ENCODE measurements at regions of chr1 and their contacts with region 1.

Region 1: DNA sequence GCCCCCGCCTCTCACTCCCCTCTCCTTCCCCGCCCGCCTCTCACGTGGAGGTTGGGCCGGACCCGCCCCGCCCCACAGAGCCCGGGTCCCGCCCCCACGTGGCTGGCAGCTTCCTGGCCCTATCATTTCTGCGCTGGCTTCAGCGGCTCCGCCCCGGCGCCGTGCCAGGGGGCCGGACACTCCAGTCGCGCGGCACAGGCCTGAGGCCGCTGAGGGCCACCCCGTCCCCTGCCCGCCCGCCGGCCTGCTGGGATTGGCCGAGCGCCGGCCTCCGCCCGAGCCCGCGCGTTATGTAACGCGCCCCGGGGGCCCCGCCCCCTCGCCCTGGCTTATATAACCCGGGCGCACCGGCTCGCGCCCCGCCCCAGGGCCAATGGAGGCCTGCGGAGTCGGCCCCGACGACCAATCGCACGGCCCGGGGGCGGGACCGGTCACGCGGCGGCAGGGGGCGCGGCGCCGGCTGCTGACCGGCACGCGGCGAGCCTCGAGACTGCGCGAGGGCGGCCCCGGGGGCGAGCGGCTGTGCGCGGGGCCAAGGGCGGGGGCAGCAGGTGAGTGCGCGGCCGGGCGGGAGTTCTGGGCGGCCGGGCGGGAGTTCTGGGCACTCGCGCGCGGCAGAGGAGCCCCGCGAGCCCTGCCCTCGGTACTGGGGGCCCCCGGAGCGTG is at the start of gene PER3:
- DNase-seq: peak; percentile 94 to 99
- H3K4me3 ChIP-seq: peak within 1 kb of the TSS; percentile 80 to 84
- H3K27ac ChIP-seq: peak within 1 kb of the TSS; percentile 89 to 93
- H3K4me1 ChIP-seq: peaks cover 0 to 16% of the 10 kb centered on the region in 2 donors
- H3K27me3 ChIP-seq: no peaks in the 10 kb centered on the region
- CTCF ChIP-seq: no peak
- total RNA-seq, gene PER3: 8.1 TPM

Region 2: DNA sequence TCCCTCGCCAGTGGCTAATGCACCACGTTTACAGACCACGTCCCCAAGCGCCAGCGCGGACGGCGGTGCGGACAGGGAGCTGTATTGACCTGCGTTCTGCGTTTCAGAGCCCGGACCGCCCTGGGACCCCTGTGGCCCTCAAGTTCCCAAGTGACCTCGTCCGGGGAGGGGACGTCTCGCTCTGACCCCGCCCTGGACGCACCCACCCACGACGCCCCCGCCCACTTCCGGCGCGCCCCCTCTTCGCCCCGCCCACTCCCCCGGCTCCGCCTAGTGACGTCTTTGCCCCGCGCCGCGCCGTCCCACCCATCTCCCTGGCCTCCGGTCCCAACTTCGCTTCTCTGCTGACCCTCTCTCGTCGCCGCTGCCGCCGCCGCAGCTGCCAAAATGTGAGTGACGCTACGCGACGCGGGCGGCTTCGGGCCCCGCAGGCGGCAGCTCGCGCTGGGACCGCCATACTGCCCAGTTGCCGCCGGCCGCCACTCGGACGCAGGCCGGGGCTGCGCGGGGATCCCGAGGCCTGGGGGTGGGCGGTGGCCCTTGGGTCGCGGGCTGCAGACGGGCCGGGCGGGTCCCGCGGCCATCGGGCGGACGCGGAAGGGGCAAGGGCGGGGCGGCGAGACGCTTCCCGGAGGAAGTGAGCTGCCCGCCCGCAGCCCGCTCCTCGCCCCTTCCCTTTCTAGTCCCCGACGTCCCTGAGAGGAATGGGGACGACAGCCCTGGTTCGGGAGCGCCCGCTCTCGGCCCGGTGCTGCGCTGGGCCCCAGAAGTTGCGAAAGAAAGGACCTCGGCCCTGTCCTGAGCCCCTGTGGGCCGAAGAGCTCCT is 12.7 kb before region 1 on chr1 and contains the start of gene VAMP3:
- intact Hi-C with region 1: loop called (anchors 1 kb)
- DNase-seq: peak; percentile 19 to 92
- H3K4me3 ChIP-seq: peak within 1 kb of the TSS; percentile 88 to 94
- H3K27ac ChIP-seq: peak within 1 kb of the TSS; percentile 85 to 94
- H3K4me1 ChIP-seq: peaks cover 6 to 11% of the 10 kb centered on the region in 2 donors
- H3K27me3 ChIP-seq: no peaks in the 10 kb centered on the region
- CTCF ChIP-seq: no peak
- total RNA-seq, gene VAMP3: 79.1 TPM

Measured in ascending aorta (tissue), 2 donors.